ENCODE measurements at regions of chr1 and their contacts with region 1.

Region 1: GRCh38 chr1:154974063-154974807 is at the start of gene CKS1B:
- DNase-seq: peak; percentile 100
- H3K4me3 ChIP-seq: peak within 1 kb of the TSS; percentile 69 to 73 (median 70)
- H3K27ac ChIP-seq: peak within 1 kb of the TSS; percentile 98
- H3K4me1 ChIP-seq: peaks cover 27% of the 10 kb centered on the region
- H3K27me3 ChIP-seq: no peaks in the 10 kb centered on the region
- CTCF ChIP-seq: no peak
- total RNA-seq, gene CKS1B: 44.2 to 95.6 TPM

Region 2: GRCh38 chr1:154936555-154937084 is 37.6 kb before region 1 on chr1 and contains the start of gene PMVK:
- CTCF ChIA-PET with region 1: no interaction called
- dilution Hi-C with region 1: no loop called
- in situ Hi-C with region 1: no loop called
- intact Hi-C with region 1: loop called (anchors 2 kb)
- DNase-seq: peak; percentile 95
- H3K4me3 ChIP-seq: peak within 1 kb of the TSS; percentile 57 to 81 (median 71)
- H3K27ac ChIP-seq: peak within 1 kb of the TSS; percentile 96
- H3K4me1 ChIP-seq: peaks cover 38% of the 10 kb centered on the region
- H3K27me3 ChIP-seq: no peaks in the 10 kb centered on the region
- CTCF ChIP-seq: peak in 1 of 2 donors; percentile 50
- total RNA-seq, gene PMVK: 7.2 to 34.7 TPM

Region 3: GRCh38 chr1:155001675-155002463 is 27.6 kb after region 1 on chr1:
- CTCF ChIA-PET with region 1: no interaction called
- dilution Hi-C with region 1: no loop called
- in situ Hi-C with region 1: no loop called
- intact Hi-C with region 1: loop called (anchors 1 kb)
- DNase-seq: peak; percentile 99
- H3K4me3 ChIP-seq: peak overlapping the region; percentile 52 to 85 (median 62)
- H3K27ac ChIP-seq: peak overlapping the region; percentile 70
- H3K4me1 ChIP-seq: peaks cover 35% of the 10 kb centered on the region
- H3K27me3 ChIP-seq: no peaks in the 10 kb centered on the region
- CTCF ChIP-seq: peak in 1 of 2 donors; percentile 60

Region 4: GRCh38 chr1:155044812-155045690 is 70.8 kb after region 1 on chr1:
- CTCF ChIA-PET with region 1: interaction called, 31 read pairs
- dilution Hi-C with region 1: no loop called
- in situ Hi-C with region 1: no loop called
- intact Hi-C with region 1: no loop called
- DNase-seq: peak; percentile 55
- H3K4me3 ChIP-seq: no peak overlapping the region
- H3K27ac ChIP-seq: no peak overlapping the region
- H3K4me1 ChIP-seq: peaks cover 20% of the 10 kb centered on the region
- H3K27me3 ChIP-seq: no peaks in the 10 kb centered on the region
- CTCF ChIP-seq: peak; percentile 76 to 84

Region 5: DNA sequence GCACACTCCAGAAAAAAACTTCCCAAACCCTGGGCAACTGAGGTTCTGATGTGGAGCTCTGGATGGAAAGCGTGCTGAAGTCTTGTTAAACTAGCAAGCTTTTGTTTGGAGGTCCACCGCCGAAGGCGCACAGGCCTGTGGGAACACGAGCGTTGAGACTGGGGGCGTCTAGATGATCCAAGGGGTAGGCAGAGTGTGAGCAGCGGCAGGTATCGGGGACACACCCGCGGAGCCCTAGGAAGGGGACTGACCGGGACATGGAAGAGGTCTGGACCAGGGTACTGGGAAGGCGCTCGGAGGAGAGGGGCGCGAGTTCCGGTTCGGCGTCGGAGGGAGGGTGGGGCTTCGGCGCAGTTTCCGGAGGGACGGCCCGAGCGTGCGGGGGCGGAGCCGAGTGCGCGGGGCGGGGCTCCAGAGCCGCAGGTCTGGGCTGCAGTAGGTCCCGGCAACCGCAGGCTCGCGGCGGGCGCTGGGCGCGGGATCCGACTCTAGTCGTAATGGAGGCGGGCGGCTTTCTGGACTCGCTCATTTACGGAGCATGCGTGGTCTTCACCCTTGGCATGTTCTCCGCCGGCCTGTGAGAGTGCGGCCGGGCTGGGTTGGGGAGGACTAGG is 161.3 kb after region 1 on chr1 and contains the start of gene SLC50A1:
- CTCF ChIA-PET with region 1: no interaction called
- dilution Hi-C with region 1: no loop called
- in situ Hi-C with region 1: no loop called
- intact Hi-C with region 1: loop called (anchors 1 kb)
- DNase-seq: peak; percentile 91
- H3K4me3 ChIP-seq: peak within 1 kb of the TSS; percentile 64 to 80 (median 70)
- H3K27ac ChIP-seq: peak within 1 kb of the TSS; percentile 98
- H3K4me1 ChIP-seq: peaks cover 44% of the 10 kb centered on the region
- H3K27me3 ChIP-seq: no peaks in the 10 kb centered on the region
- CTCF ChIP-seq: peak in 1 of 2 donors; percentile 24
- total RNA-seq, gene SLC50A1: 31.3 to 40.2 TPM

Measured in mammary epithelial cell (primary cell).